Activated CD4-positive, alpha-beta T cell treated with anti-CD3 and anti-CD28 coated beads for 36 hours (primary cell): ENCODE measurements at regions of chr19 and their contacts with region 1.

Region 1: GRCh38 chr19:40006273-40006691 is 9.4 kb downstream of the ZNF546 start:
- DNase-seq: no peak
- ATAC-seq: no peak
- H3K4me3 Mint-ChIP-seq: no peak overlapping the region
- H3K27ac Mint-ChIP-seq: no peak overlapping the region
- H3K4me1 Mint-ChIP-seq: peaks cover 8% of the 10 kb centered on the region
- H3K27me3 Mint-ChIP-seq: no peaks in the 10 kb centered on the region

Region 2: GRCh38 chr19:39970675-39971379 is 35.5 kb before region 1 on chr19 and contains the start of gene PSMC4:
- CTCF ChIA-PET with region 1: no interaction called
- POLR2A ChIA-PET with region 1: no interaction called
- intact Hi-C with region 1: no loop called
- DNase-seq: peak; percentile 99
- ATAC-seq: peak; percentile 95
- H3K4me3 Mint-ChIP-seq: peak within 1 kb of the TSS; percentile 89
- H3K27ac Mint-ChIP-seq: peak within 1 kb of the TSS; percentile 96
- H3K4me1 Mint-ChIP-seq: peaks cover 47% of the 10 kb centered on the region
- H3K27me3 Mint-ChIP-seq: no peaks in the 10 kb centered on the region
- total RNA-seq, gene PSMC4: 114 to 140 TPM

Region 3: GRCh38 chr19:40070058-40070457 is 63.8 kb after region 1 on chr19:
- CTCF ChIA-PET with region 1: no interaction called
- POLR2A ChIA-PET with region 1: no interaction called
- intact Hi-C with region 1: loop called in 1 of 2 experiments (anchors 5 kb)
- DNase-seq: no peak
- ATAC-seq: no peak
- H3K4me3 Mint-ChIP-seq: no peak overlapping the region
- H3K27ac Mint-ChIP-seq: no peak overlapping the region
- H3K4me1 Mint-ChIP-seq: no peaks in the 10 kb centered on the region
- H3K27me3 Mint-ChIP-seq: no peaks in the 10 kb centered on the region